ENCODE measurements at regions of chr18 and their contacts with region 1.

Region 1: DNA sequence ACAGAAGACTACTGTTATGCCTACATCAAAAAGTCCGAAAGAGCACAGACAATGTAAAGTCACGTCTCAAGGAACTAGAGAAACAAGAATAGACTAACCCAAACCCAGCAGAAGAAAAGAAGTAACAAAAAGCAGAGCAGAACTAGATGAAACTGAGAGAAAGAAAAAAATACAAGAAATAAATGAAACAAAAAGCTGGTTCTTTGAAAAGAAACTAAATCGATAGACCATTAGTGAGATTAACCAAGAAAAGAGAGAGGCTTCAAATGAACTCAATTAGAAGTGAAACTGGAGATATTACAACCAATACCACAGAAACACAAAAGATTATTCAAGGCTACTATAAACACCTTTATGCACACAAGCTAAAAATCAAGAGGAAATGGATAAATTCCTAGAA is 271.8 kb downstream of the MBD2 start:
- DNase-seq: no peak
- ATAC-seq: no peak
- H3K4me3 ChIP-seq: no peak overlapping the region
- H3K27ac ChIP-seq: no peak overlapping the region
- H3K4me1 ChIP-seq: no peaks in the 10 kb centered on the region
- H3K27me3 ChIP-seq: no peaks in the 10 kb centered on the region
- CTCF ChIP-seq: no peak

Region 2: GRCh38 chr18:52723550-52723970 is 1229.1 kb before region 1 on chr18:
- intact Hi-C with region 1: no loop called
- DNase-seq: no peak
- ATAC-seq: no peak
- H3K4me3 ChIP-seq: no peak overlapping the region
- H3K27ac ChIP-seq: no peak overlapping the region
- H3K4me1 ChIP-seq: no peaks in the 10 kb centered on the region
- H3K27me3 ChIP-seq: no peaks in the 10 kb centered on the region
- CTCF ChIP-seq: no peak

Region 3: GRCh38 chr18:53715243-53715853 is 237.4 kb before region 1 on chr18:
- intact Hi-C with region 1: loop called in 1 of 10 experiments (anchors 10 kb)
- DNase-seq: no peak
- ATAC-seq: no peak
- H3K4me3 ChIP-seq: no peak overlapping the region
- H3K27ac ChIP-seq: no peak overlapping the region
- H3K4me1 ChIP-seq: no peaks in the 10 kb centered on the region
- H3K27me3 ChIP-seq: no peaks in the 10 kb centered on the region
- CTCF ChIP-seq: no peak

Region 4: GRCh38 chr18:53874103-53874502 is 78.6 kb before region 1 on chr18:
- intact Hi-C with region 1: no loop called
- DNase-seq: no peak
- ATAC-seq: no peak
- H3K4me3 ChIP-seq: no peak overlapping the region
- H3K27ac ChIP-seq: no peak overlapping the region
- H3K4me1 ChIP-seq: no peaks in the 10 kb centered on the region
- H3K27me3 ChIP-seq: no peaks in the 10 kb centered on the region
- CTCF ChIP-seq: no peak

Region 5: GRCh38 chr18:53886058-53886457 is 66.6 kb before region 1 on chr18:
- intact Hi-C with region 1: no loop called
- DNase-seq: no peak
- ATAC-seq: no peak
- H3K4me3 ChIP-seq: no peak overlapping the region
- H3K27ac ChIP-seq: no peak overlapping the region
- H3K4me1 ChIP-seq: no peaks in the 10 kb centered on the region
- H3K27me3 ChIP-seq: no peaks in the 10 kb centered on the region
- CTCF ChIP-seq: no peak

Region 6: DNA sequence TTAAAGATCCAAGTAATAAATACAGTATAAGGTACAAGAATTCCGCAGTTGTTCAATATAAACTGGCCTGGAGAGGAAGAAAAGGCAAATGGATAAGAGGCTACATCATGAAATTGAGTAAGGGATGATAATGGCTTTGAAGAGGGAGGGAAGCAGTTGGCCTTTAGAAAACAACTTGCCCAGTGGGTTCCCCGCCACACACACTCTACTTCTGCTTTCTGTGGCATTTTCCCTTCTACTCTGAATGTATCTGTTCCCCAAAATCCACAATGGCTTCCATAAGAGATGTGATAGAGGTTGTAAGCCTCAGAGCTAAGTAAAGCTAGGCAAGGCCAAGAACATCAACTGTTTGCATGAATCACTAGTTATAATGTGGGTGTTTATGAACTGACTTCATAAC is 50.5 kb after region 1 on chr18:
- intact Hi-C with region 1: no loop called
- DNase-seq: no peak
- ATAC-seq: no peak
- H3K4me3 ChIP-seq: no peak overlapping the region
- H3K27ac ChIP-seq: no peak overlapping the region
- H3K4me1 ChIP-seq: no peaks in the 10 kb centered on the region
- H3K27me3 ChIP-seq: no peaks in the 10 kb centered on the region
- CTCF ChIP-seq: no peak

Region 7: GRCh38 chr18:54019641-54020040 is 66.9 kb after region 1 on chr18:
- intact Hi-C with region 1: loop called in 1 of 10 experiments (anchors 10 kb)
- DNase-seq: no peak
- ATAC-seq: no peak
- H3K4me3 ChIP-seq: no peak overlapping the region
- H3K27ac ChIP-seq: no peak overlapping the region
- H3K4me1 ChIP-seq: no peaks in the 10 kb centered on the region
- H3K27me3 ChIP-seq: no peaks in the 10 kb centered on the region
- CTCF ChIP-seq: no peak